Right ventricle myocardium inferior (tissue), 1 donor: ENCODE measurements at regions of chr13 and their contacts with region 1.

Region 1: DNA sequence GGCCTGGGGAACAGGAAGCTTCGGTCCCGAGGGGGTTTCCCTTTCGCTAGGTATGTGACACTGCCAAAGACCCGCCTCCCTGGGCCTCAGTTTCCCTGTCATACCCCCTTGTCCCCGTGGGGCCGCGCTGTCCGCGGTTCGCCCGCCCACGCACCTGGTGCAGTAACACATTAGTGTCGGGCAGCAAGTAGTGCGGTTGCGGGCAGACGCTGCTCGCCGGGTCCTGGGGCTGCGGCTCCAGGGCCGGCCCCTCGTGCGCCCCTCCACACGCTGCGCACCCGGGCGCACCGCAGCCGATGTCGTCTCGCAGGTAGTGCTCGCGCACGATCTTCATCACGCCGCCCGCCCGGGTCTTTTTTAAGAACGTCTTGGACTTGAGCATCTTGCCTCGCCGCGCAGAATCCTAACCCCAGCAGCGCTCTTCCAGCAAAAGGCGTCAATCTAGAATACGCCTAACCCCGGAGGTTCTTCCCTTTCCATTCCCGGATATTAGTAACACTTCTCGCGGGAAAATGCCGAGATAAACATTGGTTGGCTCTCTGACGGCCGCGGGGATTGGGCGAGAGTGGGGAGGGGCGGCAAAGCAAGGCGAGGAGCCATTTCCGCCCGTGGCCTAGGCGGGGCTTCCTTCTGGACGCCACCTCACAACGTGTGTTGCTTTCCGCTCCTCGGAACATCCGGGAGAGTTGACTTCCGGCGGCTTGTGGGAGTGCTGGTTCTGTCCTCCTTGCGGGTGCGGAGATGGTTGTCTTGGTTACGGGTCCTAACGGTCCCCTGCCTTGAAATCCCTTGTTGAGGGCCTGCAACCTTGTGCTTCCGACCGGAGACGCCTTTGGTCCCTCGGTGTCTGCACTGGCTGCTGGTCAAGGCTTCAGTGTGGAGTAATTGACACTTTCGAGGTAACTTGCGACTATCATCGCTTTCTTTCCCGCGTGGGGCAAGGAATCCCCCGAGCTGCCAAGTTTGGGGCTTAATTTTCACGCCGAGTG is at the starts of genes DIS3 and PIBF1:
- DNase-seq: peak; percentile 98
- ATAC-seq: peak; percentile 100
- total RNA-seq, gene DIS3: 14.8 TPM
- total RNA-seq, gene PIBF1: 16.3 TPM

Region 2: DNA sequence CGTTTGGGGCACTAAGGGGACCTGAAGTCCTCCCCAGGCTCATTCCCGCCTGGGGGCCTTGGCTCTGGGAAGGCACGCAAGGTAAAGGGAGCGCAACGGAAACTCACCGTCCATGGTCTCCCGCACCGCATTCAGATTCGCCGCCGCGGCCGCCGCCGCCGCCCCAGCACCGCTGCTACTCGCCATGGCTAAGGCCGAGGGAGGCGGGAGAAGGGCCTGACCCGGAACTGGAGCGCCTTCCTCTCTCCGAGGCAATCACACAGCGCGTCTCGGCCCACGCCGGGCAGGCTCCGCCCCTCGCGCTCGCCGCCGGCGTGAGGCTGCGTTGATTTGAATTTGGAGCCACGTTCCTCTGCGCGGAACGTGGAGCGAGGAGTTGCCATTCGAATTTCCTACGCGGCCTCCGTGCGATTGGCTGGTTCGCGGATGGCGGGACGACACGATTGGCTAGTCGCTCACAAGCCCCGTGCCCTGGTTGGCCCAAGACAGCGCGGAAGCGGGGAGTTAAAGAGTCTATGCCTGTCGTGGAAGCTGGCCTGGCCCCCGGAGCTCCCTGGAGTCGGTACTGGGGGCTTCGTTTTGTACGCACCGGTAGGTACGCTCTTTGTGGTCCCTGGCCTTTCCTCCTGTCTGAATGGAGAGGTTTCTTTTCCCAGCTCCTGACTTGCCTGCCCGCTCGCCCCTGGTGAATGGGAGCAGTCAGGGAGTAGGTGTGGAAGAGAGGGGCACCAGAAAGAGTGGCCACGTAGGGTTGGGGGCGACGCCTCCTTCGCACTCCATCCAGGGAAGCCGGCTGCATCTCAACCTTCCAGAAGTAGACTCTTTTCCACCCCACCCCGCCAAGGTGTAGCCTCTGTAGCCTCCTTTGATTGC is 54.1 kb before region 1 on chr13 and contains the starts of genes BORA and MZT1:
- intact Hi-C with region 1: loop called (anchors 1 kb)
- DNase-seq: peak; percentile 98
- ATAC-seq: peak; percentile 99
- total RNA-seq, gene BORA: 0.62 TPM
- total RNA-seq, gene MZT1: 6.6 TPM

Region 3: GRCh38 chr13:72757792-72758535 is 23.8 kb before region 1 on chr13:
- intact Hi-C with region 1: no loop called
- DNase-seq: no peak
- ATAC-seq: no peak